Activated CD4-positive, alpha-beta T cell treated with anti-CD3 and anti-CD28 coated beads for 36 hours (primary cell): ENCODE measurements at regions of chr12 and their contacts with region 1.

Region 1: GRCh38 chr12:89352492-89353187 is at the start of gene DUSP6:
- DNase-seq: peak; percentile 96
- ATAC-seq: peak; percentile 83
- H3K4me3 Mint-ChIP-seq: peak within 1 kb of the TSS; percentile 86
- H3K27ac Mint-ChIP-seq: peak within 1 kb of the TSS; percentile 92
- H3K4me1 Mint-ChIP-seq: peaks cover 46% of the 10 kb centered on the region
- H3K27me3 Mint-ChIP-seq: no peaks in the 10 kb centered on the region
- total RNA-seq, gene DUSP6: 49.9 to 60.9 TPM

Region 2: GRCh38 chr12:89040146-89040964 is 312.3 kb before region 1 on chr12:
- CTCF ChIA-PET with region 1: interaction called, 8 read pairs
- POLR2A ChIA-PET with region 1: interaction called, 5 read pairs
- intact Hi-C with region 1: loop called (anchors 1 kb)
- DNase-seq: peak; percentile 92
- ATAC-seq: peak; percentile 78
- H3K4me3 Mint-ChIP-seq: peak overlapping the region; percentile 40
- H3K27ac Mint-ChIP-seq: peak overlapping the region; percentile 99
- H3K4me1 Mint-ChIP-seq: peaks cover 54% of the 10 kb centered on the region
- H3K27me3 Mint-ChIP-seq: no peaks in the 10 kb centered on the region

Region 3: GRCh38 chr12:89162704-89163261 is 189.9 kb before region 1 on chr12:
- CTCF ChIA-PET with region 1: interaction called, 4 read pairs
- POLR2A ChIA-PET with region 1: interaction called, 4 read pairs
- intact Hi-C with region 1: loop called (anchors 1 kb)
- DNase-seq: peak; percentile 82
- ATAC-seq: peak; percentile 91
- H3K4me3 Mint-ChIP-seq: no peak overlapping the region
- H3K27ac Mint-ChIP-seq: no peak overlapping the region
- H3K4me1 Mint-ChIP-seq: peaks cover 14% of the 10 kb centered on the region
- H3K27me3 Mint-ChIP-seq: no peaks in the 10 kb centered on the region

Region 4: DNA sequence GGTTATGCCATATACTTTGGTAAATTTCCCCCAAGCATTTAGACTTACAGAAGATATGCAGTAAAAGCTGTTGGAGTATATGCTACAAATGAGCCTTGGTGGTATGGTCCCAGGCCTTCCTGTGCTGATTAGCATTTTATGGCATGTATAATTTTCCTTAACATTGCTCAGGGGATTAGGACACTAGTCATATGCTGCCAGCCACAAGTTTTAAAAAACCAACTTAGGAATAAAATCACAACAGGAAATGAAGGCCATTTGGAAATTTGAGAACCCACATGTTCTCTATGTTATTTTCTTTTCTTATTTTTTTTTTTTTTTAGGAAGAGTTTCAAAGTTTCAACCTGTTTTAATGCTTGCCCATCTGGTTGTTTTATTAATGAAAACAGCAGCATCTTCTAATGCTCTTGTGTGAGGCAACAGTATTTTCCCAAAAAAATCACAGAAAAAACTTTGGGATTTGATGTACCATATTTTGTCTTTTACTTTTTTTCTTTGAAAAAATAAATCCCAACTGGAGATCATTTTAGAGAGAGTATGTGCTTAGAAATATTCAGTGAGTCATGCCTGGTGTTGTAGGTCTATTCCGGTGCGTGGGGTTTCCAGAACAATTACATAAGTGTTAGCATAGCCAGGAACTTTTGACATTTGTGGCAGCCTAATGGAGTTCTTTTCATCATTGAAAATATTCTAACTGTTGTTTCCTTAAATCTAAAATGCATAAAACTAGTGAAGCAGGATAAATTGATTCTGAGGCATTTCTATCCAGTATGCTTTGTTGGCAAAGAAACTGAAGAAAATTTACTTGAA is 21.3 kb after region 1 on chr12:
- CTCF ChIA-PET with region 1: interaction called, 5 read pairs
- POLR2A ChIA-PET with region 1: no interaction called
- intact Hi-C with region 1: loop called (anchors 2 kb)
- DNase-seq: no peak
- ATAC-seq: no peak
- H3K4me3 Mint-ChIP-seq: no peak overlapping the region
- H3K27ac Mint-ChIP-seq: no peak overlapping the region
- H3K4me1 Mint-ChIP-seq: peaks cover 22% of the 10 kb centered on the region
- H3K27me3 Mint-ChIP-seq: no peaks in the 10 kb centered on the region

Region 5: GRCh38 chr12:89470741-89471509 is 118.3 kb after region 1 on chr12:
- CTCF ChIA-PET with region 1: interaction called, 9 read pairs
- POLR2A ChIA-PET with region 1: no interaction called
- intact Hi-C with region 1: loop called in 1 of 2 experiments (anchors 2 kb)
- DNase-seq: peak; percentile 14
- ATAC-seq: peak; percentile 57
- H3K4me3 Mint-ChIP-seq: no peak overlapping the region
- H3K27ac Mint-ChIP-seq: peak overlapping the region; percentile 69
- H3K4me1 Mint-ChIP-seq: peaks cover 57% of the 10 kb centered on the region
- H3K27me3 Mint-ChIP-seq: no peaks in the 10 kb centered on the region

Region 6: DNA sequence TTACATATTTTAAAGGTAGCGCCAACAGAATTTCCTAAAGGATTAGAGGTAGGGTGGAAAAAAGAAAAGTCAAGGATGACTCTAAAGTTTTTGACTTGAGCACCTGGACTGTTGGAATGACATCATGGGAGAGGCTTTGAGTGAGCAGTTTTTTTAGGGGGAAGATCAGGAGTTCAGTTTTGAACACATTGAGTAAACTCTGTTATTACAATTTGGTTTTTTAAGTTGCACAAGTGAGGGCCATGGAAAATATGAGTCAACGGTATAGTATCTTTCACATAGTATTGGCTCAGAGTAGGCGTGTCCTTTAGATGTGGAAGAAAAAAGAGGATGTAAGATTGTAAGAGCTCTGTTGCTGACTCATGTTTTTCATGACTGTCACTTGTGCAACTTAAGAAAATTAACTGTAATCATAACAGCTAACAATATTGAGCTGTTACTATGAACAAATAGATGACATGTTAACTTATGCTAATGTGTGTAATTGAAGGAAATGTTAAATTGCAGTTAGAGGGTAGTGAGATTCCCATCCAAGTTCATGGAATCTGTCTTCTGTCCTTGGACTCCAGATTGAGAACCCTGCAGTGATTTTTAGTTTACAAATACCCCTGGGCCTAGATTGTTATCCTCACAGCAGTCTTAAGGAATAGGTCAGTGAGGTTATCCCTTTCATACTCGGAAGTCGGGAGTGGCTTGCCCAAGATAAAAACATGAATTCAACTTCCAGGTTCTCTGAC is 404.1 kb after region 1 on chr12:
- CTCF ChIA-PET with region 1: no interaction called
- POLR2A ChIA-PET with region 1: no interaction called
- intact Hi-C with region 1: loop called in 1 of 2 experiments (anchors 2 kb)
- DNase-seq: peak; percentile 28
- ATAC-seq: peak; percentile 94
- H3K4me3 Mint-ChIP-seq: peak overlapping the region; percentile 22
- H3K27ac Mint-ChIP-seq: peak overlapping the region; percentile 72
- H3K4me1 Mint-ChIP-seq: peaks cover 37% of the 10 kb centered on the region
- H3K27me3 Mint-ChIP-seq: no peaks in the 10 kb centered on the region